HCT116 (cell line): ENCODE measurements at regions of chr10 and their contacts with region 1.

Region 1: GRCh38 chr10:98414932-98415730 is at the start of gene PYROXD2:
- DNase-seq: peak; percentile 81
- ATAC-seq: peak; percentile 96
- H3K4me3 ChIP-seq: peak within 1 kb of the TSS; percentile 82 to 92
- H3K27ac ChIP-seq: peak within 1 kb of the TSS; percentile 53
- H3K4me1 ChIP-seq: peaks cover 13 to 22% of the 10 kb centered on the region in 2 experiments
- H3K27me3 ChIP-seq: no peaks in the 10 kb centered on the region
- CTCF ChIP-seq: peak in 1 of 3 experiments; percentile 16; a peak in 1 of 6 replicates
- POLR2A ChIP-seq: peak; percentile 81
- RAD21 ChIP-seq: no peak
- total RNA-seq, gene PYROXD2: 14.2 TPM

Region 2: GRCh38 chr10:98262571-98262970 is 152.6 kb before region 1 on chr10:
- CTCF ChIA-PET with region 1: no interaction called
- POLR2A ChIA-PET with region 1: no interaction called
- RAD21 ChIA-PET with region 1: no interaction called
- intact Hi-C with region 1: loop called (anchors 10 kb)
- DNase-seq: peak; percentile 42
- ATAC-seq: peak; percentile 82
- H3K4me3 ChIP-seq: no peak overlapping the region
- H3K27ac ChIP-seq: no peak overlapping the region
- H3K4me1 ChIP-seq: peaks cover 18 to 46% of the 10 kb centered on the region in 2 experiments
- H3K27me3 ChIP-seq: no peaks in the 10 kb centered on the region
- CTCF ChIP-seq: peak in 2 of 3 experiments; percentile 67 to 69; a peak in 4 of 6 replicates
- POLR2A ChIP-seq: no peak
- RAD21 ChIP-seq: no peak